Activated CD4-positive, alpha-beta T cell treated with anti-CD3 and anti-CD28 coated beads, Interleukin-2, amount 10 ng/mL, durations not matched to agents 24 days and 14 days (primary cell): ENCODE measurements at regions of chr1 and their contacts with region 1.

Region 1: GRCh38 chr1:16440470-16441281 is at the start of gene NECAP2:
- DNase-seq: peak; percentile 99
- H3K4me3 Mint-ChIP-seq: peak within 1 kb of the TSS; percentile 93
- H3K27ac Mint-ChIP-seq: peak within 1 kb of the TSS; percentile 92
- H3K4me1 Mint-ChIP-seq: peaks cover 24% of the 10 kb centered on the region
- H3K27me3 Mint-ChIP-seq: no peaks in the 10 kb centered on the region
- total RNA-seq, gene NECAP2: 74.1 and 76.8 TPM in 2 replicates

Region 2: DNA sequence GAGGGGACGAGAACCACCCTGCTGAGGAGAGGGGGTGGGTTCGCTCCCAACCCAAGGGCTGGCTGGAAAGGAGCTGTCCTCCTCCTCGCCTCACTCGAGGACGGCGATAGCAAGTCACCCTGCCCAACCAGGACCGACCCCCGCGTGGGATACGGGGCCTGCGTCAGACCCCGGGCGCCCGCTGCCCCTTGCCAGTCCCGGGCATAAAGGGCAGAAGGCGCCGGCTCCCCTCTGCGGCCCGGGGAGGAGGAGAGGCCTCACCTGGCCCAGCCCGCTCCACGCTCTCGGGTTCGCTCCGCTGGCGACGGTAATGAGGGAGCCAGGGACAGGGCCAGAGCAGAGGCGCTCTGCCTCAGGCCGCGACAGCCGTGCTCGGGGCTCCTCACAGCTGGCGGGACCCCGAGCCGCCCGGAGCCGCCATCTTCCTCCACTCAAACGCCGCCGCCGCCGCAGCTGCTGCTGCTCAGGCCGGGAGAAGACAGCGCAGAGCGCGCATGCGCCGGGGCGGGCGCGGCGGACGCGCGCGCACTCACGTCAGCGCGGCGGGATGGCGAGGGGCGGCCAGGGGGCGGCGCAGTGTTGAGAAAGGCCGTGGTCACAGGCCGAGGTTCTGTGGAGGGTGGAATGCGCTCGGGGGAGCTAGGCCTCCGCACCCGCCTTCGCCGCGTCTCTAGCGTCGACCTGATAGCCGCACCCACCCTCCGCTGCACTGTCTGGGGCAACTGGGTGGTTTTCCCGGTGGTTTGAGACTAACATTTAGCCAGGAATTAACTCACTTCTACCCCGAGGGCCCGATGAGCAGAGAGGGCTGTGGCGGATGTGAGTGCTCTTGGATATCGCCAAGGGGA is 88.5 kb before region 1 on chr1 and contains the start of gene FBXO42:
- intact Hi-C with region 1: loop called (anchors 1 kb)
- DNase-seq: peak; percentile 99
- H3K4me3 Mint-ChIP-seq: peak within 1 kb of the TSS; percentile 90
- H3K27ac Mint-ChIP-seq: peak within 1 kb of the TSS; percentile 93
- H3K4me1 Mint-ChIP-seq: peaks cover 25% of the 10 kb centered on the region
- H3K27me3 Mint-ChIP-seq: no peaks in the 10 kb centered on the region
- total RNA-seq, gene FBXO42: 20.4 and 20.8 TPM in 2 replicates

Region 3: DNA sequence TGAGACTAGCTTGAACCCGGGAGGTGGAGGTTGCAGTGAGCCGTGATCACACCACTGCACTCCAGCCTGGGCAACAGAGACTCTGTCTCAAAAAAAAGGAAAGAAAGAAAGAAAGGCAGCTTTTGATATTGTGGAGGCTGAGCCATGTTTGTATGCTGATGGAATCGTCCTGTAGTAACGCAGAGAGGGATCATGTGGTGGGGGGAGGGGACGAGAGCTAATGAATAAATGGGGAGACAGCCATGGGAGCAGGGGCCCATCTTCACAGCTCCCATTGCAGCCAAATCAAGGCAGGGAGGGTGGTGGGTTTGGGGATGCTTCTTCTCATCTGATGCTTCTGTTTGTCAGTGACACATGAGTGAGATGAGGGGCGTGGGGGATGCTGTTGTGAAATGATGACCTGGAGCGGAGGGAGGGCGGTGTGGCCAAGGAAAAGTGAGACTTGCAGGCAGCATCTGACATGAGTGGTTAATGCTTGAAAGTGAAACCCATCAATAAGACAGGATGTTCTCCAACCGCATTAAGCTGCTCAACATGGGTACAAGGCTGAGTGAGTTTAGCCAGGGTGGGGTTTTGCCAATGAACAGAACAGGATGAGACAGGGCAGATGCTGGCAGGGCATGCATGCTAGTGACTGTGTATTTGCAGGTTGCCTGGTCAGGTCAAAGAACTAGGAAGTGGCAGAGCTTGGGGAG is 20.1 kb before region 1 on chr1:
- intact Hi-C with region 1: loop called (anchors 1 kb)
- DNase-seq: peak; percentile 90
- H3K4me3 Mint-ChIP-seq: peak overlapping the region; percentile 68
- H3K27ac Mint-ChIP-seq: peak overlapping the region; percentile 85
- H3K4me1 Mint-ChIP-seq: peaks cover 34% of the 10 kb centered on the region
- H3K27me3 Mint-ChIP-seq: no peaks in the 10 kb centered on the region

Region 4: DNA sequence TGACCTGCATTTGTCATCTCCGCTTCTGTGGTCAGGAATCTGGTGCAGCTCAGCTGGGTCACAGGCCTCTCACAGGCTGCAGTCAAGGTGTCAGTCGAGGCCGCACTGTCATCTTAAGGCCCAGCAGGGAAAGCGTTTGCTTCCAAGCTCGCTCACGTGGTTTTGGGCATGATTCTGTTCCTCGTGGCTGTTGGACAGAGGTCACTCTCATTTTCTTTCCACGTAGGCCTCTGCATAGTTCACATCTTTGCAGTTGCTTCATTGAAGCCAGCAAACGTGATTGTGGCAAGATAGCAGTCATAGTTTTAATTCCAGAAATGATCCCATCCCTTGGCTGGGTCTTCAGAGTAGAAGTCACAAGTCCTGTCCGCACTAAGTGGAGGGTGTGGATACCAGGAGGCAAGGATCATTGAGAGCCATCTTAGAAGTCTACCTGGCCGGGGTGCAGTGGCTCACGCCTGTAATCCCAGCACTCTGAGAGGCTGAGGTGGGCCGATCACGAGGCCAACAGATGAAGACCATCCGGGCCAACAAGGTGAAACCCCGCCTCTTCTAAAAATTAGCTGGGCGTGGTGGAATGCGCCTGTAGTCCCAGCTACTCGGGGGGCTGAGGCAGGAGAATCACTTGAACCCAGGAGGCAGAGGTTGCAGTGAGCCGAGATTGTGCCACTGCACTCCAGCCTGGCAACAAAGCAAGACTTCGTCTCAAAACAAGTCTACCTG is 24.4 kb after region 1 on chr1:
- intact Hi-C with region 1: no loop called
- DNase-seq: no peak
- H3K4me3 Mint-ChIP-seq: no peak overlapping the region
- H3K27ac Mint-ChIP-seq: no peak overlapping the region
- H3K4me1 Mint-ChIP-seq: peaks cover 2% of the 10 kb centered on the region
- H3K27me3 Mint-ChIP-seq: no peaks in the 10 kb centered on the region

Region 5: DNA sequence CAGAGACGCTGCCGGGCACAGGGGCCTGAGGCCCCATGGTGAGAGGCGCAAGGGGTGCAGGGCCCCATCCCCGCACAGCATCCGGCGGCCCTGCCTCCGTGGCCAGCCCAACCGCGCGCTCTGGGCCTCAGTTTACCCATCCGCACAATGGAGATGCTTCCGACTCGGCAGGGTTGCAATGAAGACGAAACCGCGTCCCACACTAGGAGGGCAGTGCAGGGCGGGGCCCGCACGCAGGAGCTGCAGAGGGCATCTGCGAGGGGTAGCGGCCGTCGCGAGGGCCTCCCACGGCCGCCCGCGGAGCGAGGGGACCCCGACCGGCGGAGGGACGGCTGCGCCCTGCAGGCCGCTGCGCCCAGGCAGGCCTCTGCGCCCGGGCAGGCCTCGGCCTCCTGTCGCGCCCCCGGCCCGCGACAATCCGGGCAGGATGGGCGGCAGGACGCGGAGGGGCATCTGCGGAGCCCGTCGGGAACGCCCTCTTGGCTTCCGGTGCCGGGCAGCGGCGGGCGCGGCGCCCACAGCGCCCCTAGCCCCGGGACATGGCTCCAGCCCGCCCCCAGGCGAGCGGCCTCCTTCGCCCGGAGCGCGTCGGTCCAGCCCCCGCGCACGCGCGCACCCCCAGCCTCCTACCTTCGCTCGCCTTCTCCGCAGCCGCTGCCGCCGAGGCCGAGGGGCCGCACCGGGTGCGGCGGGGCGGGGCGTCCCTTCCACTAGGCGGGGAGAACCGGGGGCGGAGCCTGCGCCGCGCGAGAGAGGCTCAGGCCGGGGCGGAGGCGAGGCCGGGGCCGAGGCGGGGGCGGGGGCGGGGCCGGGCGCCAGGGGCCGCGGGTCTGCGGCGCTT is 58.1 kb after region 1 on chr1:
- intact Hi-C with region 1: loop called (anchors 5 kb)
- DNase-seq: peak; percentile 97
- H3K4me3 Mint-ChIP-seq: peak overlapping the region; percentile 86
- H3K27ac Mint-ChIP-seq: no peak overlapping the region
- H3K4me1 Mint-ChIP-seq: peaks cover 15% of the 10 kb centered on the region
- H3K27me3 Mint-ChIP-seq: peaks cover 9% of the 10 kb centered on the region

Region 6: GRCh38 chr1:16883008-16883407 is 442.3 kb after region 1 on chr1:
- intact Hi-C with region 1: no loop called
- DNase-seq: peak; percentile 41
- H3K4me3 Mint-ChIP-seq: no peak overlapping the region
- H3K27ac Mint-ChIP-seq: no peak overlapping the region
- H3K4me1 Mint-ChIP-seq: no peaks in the 10 kb centered on the region
- H3K27me3 Mint-ChIP-seq: peaks cover 67% of the 10 kb centered on the region